ENCODE measurements at regions of chr16 and their contacts with region 1.

Region 1: DNA sequence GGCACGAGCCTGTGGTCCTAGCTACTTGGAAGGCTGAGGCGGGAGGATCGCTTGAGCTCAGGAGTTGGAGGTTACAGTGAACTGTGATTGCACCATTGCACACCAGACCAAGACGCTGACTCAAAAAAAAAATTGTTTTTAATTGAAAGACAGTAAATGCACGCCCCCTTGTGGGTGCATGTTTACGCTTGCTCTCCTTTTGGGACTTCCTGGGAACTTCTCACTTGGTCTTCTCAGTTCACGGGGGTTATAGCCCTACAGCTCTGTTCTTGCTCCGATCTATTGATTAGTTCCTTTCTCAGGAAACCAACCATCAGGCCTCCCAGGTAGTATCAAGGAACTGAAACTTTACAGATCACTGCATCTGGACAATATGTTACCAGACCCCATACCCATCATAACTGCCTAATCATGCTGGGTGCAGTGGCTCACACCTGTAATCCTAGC is 14.2 kb upstream of the RIPOR1 start:
- DNase-seq: peak; percentile 95
- H3K4me3 Mint-ChIP-seq: no peak overlapping the region
- H3K27ac Mint-ChIP-seq: peak overlapping the region; percentile 77
- H3K4me1 Mint-ChIP-seq: peaks cover 6% of the 10 kb centered on the region
- H3K27me3 Mint-ChIP-seq: no peaks in the 10 kb centered on the region

Region 2: DNA sequence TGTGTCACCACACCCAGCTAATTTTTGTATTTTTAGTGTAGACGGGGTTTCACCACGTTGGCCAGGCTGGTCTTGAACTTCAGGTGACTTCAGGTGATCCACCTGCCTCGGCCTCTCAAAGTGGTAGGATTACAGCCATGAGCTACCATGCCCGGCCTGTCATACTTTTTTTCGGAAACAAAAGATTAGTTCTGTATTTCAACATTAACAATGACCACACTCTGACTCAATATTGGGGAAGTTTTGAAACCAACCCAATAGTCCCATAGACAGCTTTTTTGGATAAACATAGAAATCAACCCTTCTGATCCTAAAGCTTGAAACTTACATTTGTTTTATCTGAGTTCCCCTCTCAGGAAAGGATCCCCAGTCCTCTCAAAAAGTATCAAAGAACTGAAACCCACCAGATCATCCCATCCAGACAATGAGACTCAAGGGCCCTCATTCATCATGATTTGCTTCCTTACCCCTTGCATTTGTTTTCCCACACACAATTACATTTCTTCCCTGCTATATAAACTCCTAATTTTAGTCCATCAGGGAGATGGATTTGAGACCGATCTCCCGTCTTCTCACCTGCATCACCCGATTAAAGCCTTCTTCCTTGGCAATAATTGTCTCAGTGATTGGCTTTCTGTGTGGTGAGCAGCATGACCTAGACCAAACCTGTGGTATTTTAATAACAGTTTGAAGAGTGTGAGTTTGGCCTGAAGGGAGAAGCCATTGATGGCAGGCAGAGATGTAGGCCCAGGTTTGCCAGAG is 23.9 kb before region 1 on chr16:
- CTCF ChIA-PET with region 1: interaction called, 195 read pairs
- intact Hi-C with region 1: loop called (anchors 1 kb)
- DNase-seq: no peak
- H3K4me3 Mint-ChIP-seq: no peak overlapping the region
- H3K27ac Mint-ChIP-seq: peak overlapping the region; percentile 34
- H3K4me1 Mint-ChIP-seq: peaks cover 14% of the 10 kb centered on the region
- H3K27me3 Mint-ChIP-seq: no peaks in the 10 kb centered on the region

Region 3: GRCh38 chr16:67499106-67499505 is 15.3 kb before region 1 on chr16:
- CTCF ChIA-PET with region 1: interaction called, 195 read pairs
- intact Hi-C with region 1: loop called (anchors 1 kb)
- DNase-seq: no peak
- H3K4me3 Mint-ChIP-seq: no peak overlapping the region
- H3K27ac Mint-ChIP-seq: no peak overlapping the region
- H3K4me1 Mint-ChIP-seq: peaks cover 12% of the 10 kb centered on the region
- H3K27me3 Mint-ChIP-seq: no peaks in the 10 kb centered on the region

Region 4: DNA sequence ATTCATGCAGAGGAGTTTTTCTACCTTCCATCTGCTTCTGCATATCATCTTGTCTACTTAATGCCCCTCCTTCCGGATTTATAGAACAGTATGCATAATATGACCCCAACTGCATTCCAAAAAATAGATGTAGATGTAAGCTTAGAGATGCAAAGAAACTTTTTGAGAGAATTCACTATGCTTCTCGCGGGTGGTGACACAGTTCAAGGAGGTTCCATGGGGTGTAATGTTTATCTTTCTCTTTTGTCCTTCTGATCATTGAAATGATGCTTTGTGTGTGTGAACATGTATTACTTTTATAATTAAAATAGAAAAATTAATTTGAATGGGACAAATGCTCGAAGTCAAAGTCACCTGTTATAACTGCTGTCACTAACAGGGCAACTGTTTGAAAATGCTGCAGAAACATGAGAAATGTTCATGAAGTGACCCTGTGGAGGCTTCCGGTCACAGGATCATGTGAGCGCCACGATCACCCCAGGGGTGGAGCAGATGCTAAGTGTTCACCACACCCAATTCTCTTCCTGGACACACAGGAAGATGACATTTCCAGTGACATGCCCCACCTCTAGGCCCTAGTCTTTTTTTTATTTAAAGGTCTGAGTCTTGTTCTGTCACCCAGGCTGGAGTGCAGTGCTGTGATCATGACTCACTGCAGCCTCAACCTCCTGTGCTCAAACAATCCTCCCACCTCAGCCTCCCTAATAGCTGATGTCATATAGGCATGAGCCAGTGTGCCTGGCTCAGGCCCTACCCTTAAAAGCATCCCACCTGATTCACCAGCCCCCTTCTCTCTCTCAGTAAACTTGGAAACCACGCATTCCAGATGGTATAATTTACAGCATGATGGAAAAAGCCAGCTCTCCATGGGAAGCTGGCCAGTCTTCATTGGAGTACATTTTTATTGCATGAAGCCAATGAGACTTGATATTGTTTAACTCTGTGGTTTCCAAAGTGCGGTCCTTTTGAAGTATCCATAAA is 10.1 kb before region 1 on chr16:
- CTCF ChIA-PET with region 1: interaction called, 8 read pairs
- intact Hi-C with region 1: loop called (anchors 1 kb)
- DNase-seq: peak; percentile 75
- H3K4me3 Mint-ChIP-seq: no peak overlapping the region
- H3K27ac Mint-ChIP-seq: peak overlapping the region; percentile 64
- H3K4me1 Mint-ChIP-seq: peaks cover 49% of the 10 kb centered on the region
- H3K27me3 Mint-ChIP-seq: no peaks in the 10 kb centered on the region

Measured in activated naive CD4-positive, alpha-beta T cell treated with anti-CD3 and anti-CD28 coated beads for 36 hours (primary cell).